Kidney (tissue), 22 donors: ENCODE measurements at regions of chr17 and their contacts with region 1.

Region 1: DNA sequence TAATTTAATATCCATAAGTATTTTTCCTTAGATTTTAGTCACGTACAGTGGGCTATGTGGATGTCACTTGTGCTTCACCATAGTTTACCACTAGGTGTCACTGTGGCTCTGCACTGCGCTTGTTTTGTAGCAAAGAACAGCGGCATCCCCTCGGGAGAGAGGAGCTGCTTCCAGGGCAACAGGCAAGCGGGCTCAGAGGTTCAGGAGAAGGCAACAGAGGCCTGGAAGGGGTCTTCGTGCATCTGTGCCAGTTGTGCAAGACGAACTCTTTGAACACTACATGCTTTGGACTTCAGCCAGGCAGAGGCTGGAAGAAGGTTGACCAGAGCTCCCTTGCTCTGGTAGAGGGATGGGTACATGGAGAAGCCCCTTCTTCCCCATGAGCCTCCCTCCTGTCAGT is 20.6 kb downstream of the CYB561 start:
- DNase-seq: peak; percentile 80 to 92 (median 88)
- H3K4me3 ChIP-seq: no peak overlapping the region
- H3K27ac ChIP-seq: no peak overlapping the region
- H3K4me1 ChIP-seq: no peaks in the 10 kb centered on the region
- H3K27me3 ChIP-seq: no peaks in the 10 kb centered on the region
- CTCF ChIP-seq: peak; percentile 97

Region 2: GRCh38 chr17:63609816-63610573 is 184.5 kb after region 1 on chr17:
- intact Hi-C with region 1: loop called (anchors 5 kb)
- DNase-seq: no peak
- H3K4me3 ChIP-seq: no peak overlapping the region
- H3K27ac ChIP-seq: no peak overlapping the region
- H3K4me1 ChIP-seq: no peaks in the 10 kb centered on the region
- H3K27me3 ChIP-seq: no peaks in the 10 kb centered on the region
- CTCF ChIP-seq: no peak